A673 (cell line): ENCODE measurements at regions of chr22 and their contacts with region 1.

Region 1: GRCh38 chr22:25928038-25928437 is 186.1 kb downstream of the MYO18B start:
- DNase-seq: no peak
- H3K4me3 ChIP-seq: no peak overlapping the region
- H3K27ac ChIP-seq: no peak overlapping the region
- H3K4me1 ChIP-seq: no peaks in the 10 kb centered on the region
- H3K27me3 ChIP-seq: peaks cover 44% of the 10 kb centered on the region
- CTCF ChIP-seq: no peak

Region 2: GRCh38 chr22:25869771-25870170 is 58.3 kb before region 1 on chr22:
- CTCF ChIA-PET with region 1: no interaction called
- POLR2A ChIA-PET with region 1: no interaction called
- intact Hi-C with region 1: loop called (anchors 10 kb)
- DNase-seq: no peak
- H3K4me3 ChIP-seq: no peak overlapping the region
- H3K27ac ChIP-seq: no peak overlapping the region
- H3K4me1 ChIP-seq: no peaks in the 10 kb centered on the region
- H3K27me3 ChIP-seq: no peaks in the 10 kb centered on the region
- CTCF ChIP-seq: no peak

Region 3: GRCh38 chr22:25942856-25943411 is 14.9 kb after region 1 on chr22:
- CTCF ChIA-PET with region 1: no interaction called
- POLR2A ChIA-PET with region 1: no interaction called
- intact Hi-C with region 1: no loop called
- DNase-seq: peak; percentile 64
- H3K4me3 ChIP-seq: no peak overlapping the region
- H3K27ac ChIP-seq: no peak overlapping the region
- H3K4me1 ChIP-seq: no peaks in the 10 kb centered on the region
- H3K27me3 ChIP-seq: peaks cover 12% of the 10 kb centered on the region
- CTCF ChIP-seq: no peak

Region 4: GRCh38 chr22:26471522-26471921 is 543.5 kb after region 1 on chr22:
- CTCF ChIA-PET with region 1: no interaction called
- POLR2A ChIA-PET with region 1: no interaction called
- intact Hi-C with region 1: no loop called
- DNase-seq: no peak
- H3K4me3 ChIP-seq: no peak overlapping the region
- H3K27ac ChIP-seq: no peak overlapping the region
- H3K4me1 ChIP-seq: no peaks in the 10 kb centered on the region
- H3K27me3 ChIP-seq: no peaks in the 10 kb centered on the region
- CTCF ChIP-seq: no peak